ENCODE measurements at regions of chr1 and their contacts with region 1.

Region 1: DNA sequence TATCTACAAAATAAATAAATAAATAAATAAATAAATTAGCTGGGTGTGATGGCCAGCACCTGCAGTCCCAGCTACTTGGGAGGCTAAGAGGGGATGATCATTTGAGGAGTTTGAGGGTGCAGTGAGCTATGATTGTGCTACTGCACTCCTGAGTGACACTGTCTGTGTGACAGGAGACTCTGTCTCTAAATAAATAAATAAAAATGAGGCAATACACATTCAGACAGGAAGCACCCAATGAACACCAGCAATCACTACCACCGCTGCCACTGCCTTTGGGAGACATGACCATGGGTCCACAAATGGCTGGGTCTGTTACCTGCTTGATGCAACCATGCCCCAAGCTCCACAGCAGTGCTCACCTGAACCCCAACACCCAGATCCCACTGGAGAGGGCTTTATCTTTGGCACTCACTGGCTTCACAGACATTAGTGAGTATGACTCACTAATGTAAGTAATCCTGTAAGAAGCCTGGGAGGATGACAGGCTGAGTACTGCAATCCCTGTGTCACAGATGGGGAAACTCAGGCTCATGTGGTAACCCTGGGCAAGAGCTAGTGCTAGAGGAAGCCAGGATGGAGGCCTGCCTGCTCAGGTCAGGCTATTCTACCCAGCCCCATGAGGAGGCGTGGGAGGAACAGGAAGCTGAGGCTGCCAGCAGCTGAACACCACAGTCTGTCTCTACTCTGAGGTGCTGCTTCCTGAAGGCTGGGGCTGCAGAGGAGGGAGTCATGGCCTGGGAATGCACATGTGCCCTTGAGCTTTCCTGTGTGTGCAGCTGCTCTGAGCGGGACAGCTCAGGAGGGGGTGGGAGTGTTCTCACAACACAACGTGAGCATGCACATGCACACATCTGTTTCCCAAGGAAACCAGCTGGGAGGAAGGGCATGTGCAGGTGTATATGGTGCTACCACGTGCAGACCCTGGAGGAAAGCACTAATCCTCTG is 43.0 kb downstream of the SLC9A1 start:
- DNase-seq: peak; percentile 43 to 84 (median 64)
- ATAC-seq: peak; percentile 94 to 95
- H3K4me3 Mint-ChIP-seq: peak overlapping the region; percentile 31 to 89 (median 77)
- H3K27ac Mint-ChIP-seq: peak overlapping the region; percentile 89 to 99 (median 95)
- H3K4me1 Mint-ChIP-seq: peaks cover 38 to 76% (median 73%) of the 10 kb centered on the region in 4 donors
- H3K27me3 Mint-ChIP-seq: no peaks in the 10 kb centered on the region

Region 2: GRCh38 chr1:27074175-27074780 is 37.6 kb before region 1 on chr1:
- POLR2A ChIA-PET with region 1: no interaction called
- DNase-seq: no peak
- ATAC-seq: no peak
- H3K4me3 Mint-ChIP-seq: no peak overlapping the region
- H3K27ac Mint-ChIP-seq: no peak overlapping the region
- H3K4me1 Mint-ChIP-seq: no peaks in the 10 kb centered on the region
- H3K27me3 Mint-ChIP-seq: peaks cover 0 to 6% (median 0%) of the 10 kb centered on the region in 5 donors

Region 3: GRCh38 chr1:27136998-27137542 is 25.2 kb after region 1 on chr1:
- POLR2A ChIA-PET with region 1: interaction called, 53 read pairs
- DNase-seq: peak; percentile 47 to 90 (median 74)
- ATAC-seq: peak; percentile 94 to 95
- H3K4me3 Mint-ChIP-seq: peak overlapping the region; percentile 85 to 93 (median 89)
- H3K27ac Mint-ChIP-seq: peak overlapping the region; percentile 98 to 100 (median 100)
- H3K4me1 Mint-ChIP-seq: peaks cover 29 to 65% (median 61%) of the 10 kb centered on the region in 4 donors
- H3K27me3 Mint-ChIP-seq: no peaks in the 10 kb centered on the region

Region 4: GRCh38 chr1:27142464-27142863 is 30.6 kb after region 1 on chr1:
- POLR2A ChIA-PET with region 1: interaction called, 53 read pairs
- DNase-seq: peak in 5 of 10 donors; percentile 17 to 67 (median 27)
- ATAC-seq: peak; percentile 91 to 94
- H3K4me3 Mint-ChIP-seq: peak overlapping the region; percentile 2 to 79 (median 60)
- H3K27ac Mint-ChIP-seq: peak overlapping the region; percentile 88 to 98 (median 96)
- H3K4me1 Mint-ChIP-seq: peaks cover 38 to 73% (median 62%) of the 10 kb centered on the region in 4 donors
- H3K27me3 Mint-ChIP-seq: no peaks in the 10 kb centered on the region

Region 5: GRCh38 chr1:27154991-27155781 is 43.3 kb after region 1 on chr1 and contains the start of gene SLC9A1:
- POLR2A ChIA-PET with region 1: interaction called, 92 read pairs
- DNase-seq: peak; percentile 91 to 96 (median 94)
- ATAC-seq: peak; percentile 91 to 94
- H3K4me3 Mint-ChIP-seq: peak within 1 kb of the TSS; percentile 81 to 94 (median 90)
- H3K27ac Mint-ChIP-seq: peak within 1 kb of the TSS; percentile 97 to 100 (median 99)
- H3K4me1 Mint-ChIP-seq: peaks cover 32 to 53% (median 51%) of the 10 kb centered on the region in 4 donors
- H3K27me3 Mint-ChIP-seq: no peaks in the 10 kb centered on the region
- polyA plus RNA-seq, gene SLC9A1: 4.5 to 14.2 (median 8.5) TPM

Region 6: GRCh38 chr1:27284425-27285273 is 172.7 kb after region 1 on chr1:
- POLR2A ChIA-PET with region 1: interaction called, 14 read pairs
- DNase-seq: peak; percentile 69 to 94 (median 84)
- ATAC-seq: peak; percentile 94 to 99
- H3K4me3 Mint-ChIP-seq: no peak overlapping the region
- H3K27ac Mint-ChIP-seq: peak overlapping the region in 6 of 10 donors; percentile 3 to 72 (median 28)
- H3K4me1 Mint-ChIP-seq: peaks cover 3 to 7% (median 5%) of the 10 kb centered on the region in 4 donors
- H3K27me3 Mint-ChIP-seq: no peaks in the 10 kb centered on the region

Measured in naive thymus-derived CD8-positive, alpha-beta T cell (primary cell).